Panc1 (cell line): ENCODE measurements at regions of chr16 and their contacts with region 1.

Region 1: DNA sequence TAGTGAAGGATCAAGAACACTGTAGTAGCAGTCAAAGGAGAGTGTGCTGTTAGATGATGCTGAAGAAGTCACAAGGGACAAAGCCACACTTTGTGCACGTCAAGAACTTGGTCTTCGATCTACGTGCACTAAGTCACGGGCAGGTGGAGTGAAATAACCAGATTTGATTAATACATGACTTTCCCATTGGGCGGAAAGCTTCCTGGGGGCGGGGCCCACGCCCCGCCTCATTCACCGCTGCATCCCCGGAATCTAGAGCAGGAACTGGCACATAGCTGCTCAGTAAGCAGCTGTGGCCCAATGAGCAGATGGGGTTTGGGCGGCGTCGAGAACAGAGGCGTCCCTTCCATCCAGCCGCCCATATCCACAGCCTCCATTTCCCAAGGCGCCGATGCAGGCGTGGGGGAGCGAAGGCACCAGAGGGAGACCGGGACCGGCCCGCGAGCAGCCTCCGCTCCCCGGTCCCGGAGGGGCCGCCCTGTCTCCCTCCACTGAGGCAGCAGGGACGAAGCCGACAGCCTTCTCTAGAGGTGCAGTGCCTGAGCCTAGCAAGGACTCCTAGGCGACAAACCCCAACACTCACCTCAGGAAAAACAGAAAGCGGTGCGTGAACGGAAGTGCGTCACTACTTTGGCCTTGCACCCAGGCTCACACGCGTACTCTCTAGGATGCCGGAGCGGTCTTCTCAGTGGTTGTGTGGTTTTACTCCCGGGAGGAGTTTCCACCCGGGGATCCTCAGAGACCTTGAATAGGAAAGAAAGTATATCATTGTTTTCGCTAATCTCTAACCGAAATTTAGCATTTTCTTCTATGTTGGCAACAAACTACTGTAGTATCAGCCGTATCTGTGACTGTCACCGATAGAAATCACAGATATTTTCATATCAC is 4.9 kb downstream of the ZNF19 start:
- DNase-seq: no peak
- ATAC-seq: peak; percentile 99
- H3K4me3 ChIP-seq: peak overlapping the region; percentile 83 to 86
- H3K27ac ChIP-seq: peak overlapping the region; percentile 77
- H3K4me1 ChIP-seq: no peaks in the 10 kb centered on the region
- H3K27me3 ChIP-seq: no peaks in the 10 kb centered on the region
- CTCF ChIP-seq: no peak

Region 2: GRCh38 chr16:71461686-71462648 is 22.3 kb before region 1 on chr16 and contains the start of gene ZNF23:
- CTCF ChIA-PET with region 1: no interaction called
- POLR2A ChIA-PET with region 1: interaction called, 3 read pairs
- in situ Hi-C with region 1: no loop called
- intact Hi-C with region 1: loop called (anchors 1 kb)
- DNase-seq: no peak
- ATAC-seq: peak; percentile 100
- H3K4me3 ChIP-seq: peak within 1 kb of the TSS; percentile 89 to 92
- H3K27ac ChIP-seq: peak within 1 kb of the TSS; percentile 83
- H3K4me1 ChIP-seq: no peaks in the 10 kb centered on the region; the same call in 1 of the 2 replicates
- H3K27me3 ChIP-seq: no peaks in the 10 kb centered on the region
- CTCF ChIP-seq: no peak; the same call in 1 of the 2 replicates
- total RNA-seq, gene ZNF23: 5.2 TPM

Region 3: GRCh38 chr16:71600822-71601221 is 116.6 kb after region 1 on chr16:
- CTCF ChIA-PET with region 1: no interaction called
- POLR2A ChIA-PET with region 1: no interaction called
- in situ Hi-C with region 1: no loop called
- intact Hi-C with region 1: no loop called
- DNase-seq: no peak
- ATAC-seq: no peak
- H3K4me3 ChIP-seq: no peak overlapping the region
- H3K27ac ChIP-seq: no peak overlapping the region
- H3K4me1 ChIP-seq: no peaks in the 10 kb centered on the region
- H3K27me3 ChIP-seq: no peaks in the 10 kb centered on the region
- CTCF ChIP-seq: no peak